Heart left ventricle (tissue), 16 donors: ENCODE measurements at regions of chr19 and their contacts with region 1.

Region 1: DNA sequence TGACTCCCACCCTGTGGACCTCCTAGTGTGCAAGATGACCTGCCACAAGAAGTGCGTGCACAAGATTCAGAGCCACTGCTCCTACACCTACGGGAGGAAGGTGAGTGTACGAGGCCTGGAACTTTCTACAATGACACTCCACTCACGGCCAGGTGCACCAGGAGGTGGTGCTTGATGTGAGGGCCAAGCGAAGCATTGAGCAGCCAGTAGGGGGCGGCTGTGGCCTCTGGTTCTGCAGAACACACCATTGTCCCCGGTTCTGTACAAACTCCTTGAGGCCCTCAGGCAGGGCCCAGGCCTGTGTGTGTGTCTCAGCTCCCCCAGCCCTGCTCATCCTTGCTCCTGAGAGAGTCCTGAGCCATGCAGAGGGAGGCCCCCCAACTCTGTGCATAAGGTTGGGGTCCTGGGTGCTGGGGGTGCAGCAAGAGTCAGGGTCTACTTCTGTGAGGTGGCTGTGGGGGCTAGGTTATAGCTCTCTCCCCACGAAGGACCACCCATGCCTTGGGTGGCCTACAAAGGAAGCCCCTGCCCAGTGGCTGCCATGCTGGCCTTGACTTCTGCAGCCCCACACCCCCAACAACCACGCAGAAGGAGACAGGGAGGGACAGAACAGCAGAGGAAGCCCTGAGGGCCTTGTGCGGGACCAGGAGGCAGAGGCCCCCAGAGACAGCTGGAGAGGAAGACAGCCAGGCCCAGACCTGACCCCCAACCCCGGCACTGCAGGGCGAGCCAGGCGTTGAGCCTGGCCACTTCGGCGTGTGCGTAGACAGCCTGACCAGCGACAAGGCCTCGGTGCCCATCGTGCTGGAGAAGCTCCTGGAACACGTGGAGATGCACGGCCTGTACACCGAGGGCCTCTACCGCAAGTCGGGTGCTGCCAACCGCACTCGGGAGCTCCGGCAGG is 9.7 kb upstream of the USE1 start:
- DNase-seq: peak in 4 of 5 donors; percentile 49 to 71 (median 62)
- ATAC-seq: peak; percentile 50 to 67 (median 52)
- H3K4me3 ChIP-seq: no peak overlapping the region
- H3K27ac ChIP-seq: no peak overlapping the region
- H3K4me1 ChIP-seq: no peaks in the 10 kb centered on the region
- H3K27me3 ChIP-seq: no peaks in the 10 kb centered on the region
- CTCF ChIP-seq: peak; percentile 51 to 78 (median 62)
- POLR2A ChIP-seq: no peak

Region 2: DNA sequence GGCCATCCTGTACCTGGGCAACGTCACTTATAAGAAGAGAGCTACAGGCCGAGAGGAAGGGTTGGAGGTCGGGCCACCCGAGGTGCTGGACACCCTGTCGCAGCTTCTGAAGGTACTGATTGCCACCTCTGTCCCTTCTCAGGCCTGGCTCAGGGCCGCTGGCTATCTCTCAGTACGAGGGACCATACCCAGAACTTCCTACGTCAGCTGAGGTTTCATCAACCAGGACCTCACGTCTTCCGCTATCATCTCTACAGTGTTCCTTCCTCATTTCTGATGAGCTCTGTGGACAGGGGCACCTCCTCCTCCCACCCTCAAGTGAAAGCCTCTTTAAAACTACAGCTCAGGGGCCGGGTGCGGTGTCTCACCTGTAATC is 48.6 kb before region 1 on chr19:
- intact Hi-C with region 1: loop called in 1 of 10 experiments (anchors 10 kb)
- DNase-seq: peak in 1 of 5 donors; percentile 26
- ATAC-seq: peak in 3 of 4 donors; percentile 28 to 71 (median 68)
- H3K4me3 ChIP-seq: no peak overlapping the region
- H3K27ac ChIP-seq: peak overlapping the region in 1 of 12 donors; percentile 62
- H3K4me1 ChIP-seq: peaks cover 0 to 4% (median 0%) of the 10 kb centered on the region in 12 donors
- H3K27me3 ChIP-seq: no peaks in the 10 kb centered on the region
- CTCF ChIP-seq: no peak
- POLR2A ChIP-seq: no peak

Region 3: GRCh38 chr19:17246681-17247425 is 41.4 kb after region 1 on chr19:
- intact Hi-C with region 1: loop called in 1 of 10 experiments (anchors 5 kb)
- DNase-seq: peak in 3 of 5 donors; percentile 50 to 74 (median 64)
- ATAC-seq: peak in 3 of 4 donors; percentile 1 to 25 (median 17)
- H3K4me3 ChIP-seq: peak overlapping the region in 11 of 12 donors; percentile 10 to 96 (median 86)
- H3K27ac ChIP-seq: peak overlapping the region; percentile 56 to 94 (median 78)
- H3K4me1 ChIP-seq: peaks cover 6 to 40% (median 24%) of the 10 kb centered on the region in 12 donors
- H3K27me3 ChIP-seq: no peaks in the 10 kb centered on the region
- CTCF ChIP-seq: no peak
- POLR2A ChIP-seq: no peak

Region 4: DNA sequence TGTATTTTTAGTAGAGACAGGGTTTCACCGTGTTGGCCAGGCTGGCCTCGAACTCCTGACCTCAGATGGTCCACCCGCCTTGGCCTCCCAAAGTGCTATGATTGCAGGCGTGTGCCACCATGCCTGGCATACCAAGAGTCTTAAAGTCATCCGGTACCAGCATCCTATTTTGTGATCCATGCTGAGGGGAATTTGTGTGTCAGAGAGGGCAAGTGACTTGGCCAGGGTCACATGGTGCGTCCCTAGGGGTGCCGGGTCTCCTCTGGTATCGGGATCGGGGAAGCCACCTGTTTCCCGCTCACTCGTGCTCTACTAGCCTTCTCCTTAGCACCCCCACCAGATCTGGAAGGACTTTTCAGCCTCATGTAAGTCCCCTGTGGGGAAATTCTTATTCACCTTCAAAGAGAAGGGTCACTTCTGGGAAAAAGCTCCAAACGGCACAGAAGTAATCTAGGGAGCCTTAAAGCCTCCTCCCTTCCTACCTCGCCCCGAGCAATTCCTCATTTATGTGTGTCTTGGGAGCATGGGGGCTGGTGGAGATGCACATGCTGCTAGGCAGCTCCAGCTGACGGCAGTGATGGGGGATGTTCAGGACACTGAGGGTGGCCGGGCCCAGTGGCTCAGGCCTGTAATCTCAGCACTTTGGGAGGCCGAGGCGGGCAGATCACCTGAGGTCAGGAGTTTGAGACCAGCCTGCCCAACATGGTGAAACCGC is 70.1 kb after region 1 on chr19:
- intact Hi-C with region 1: loop called in 6 of 10 experiments (anchors 2 to 10 kb)
- DNase-seq: no peak
- ATAC-seq: no peak
- H3K4me3 ChIP-seq: no peak overlapping the region
- H3K27ac ChIP-seq: no peak overlapping the region
- H3K4me1 ChIP-seq: no peaks in the 10 kb centered on the region
- H3K27me3 ChIP-seq: peaks cover 0 to 2% (median 0%) of the 10 kb centered on the region in 9 donors
- CTCF ChIP-seq: no peak
- POLR2A ChIP-seq: no peak